PC-9 (cell line): ENCODE measurements at regions of chr22 and their contacts with region 1.

Region 1: DNA sequence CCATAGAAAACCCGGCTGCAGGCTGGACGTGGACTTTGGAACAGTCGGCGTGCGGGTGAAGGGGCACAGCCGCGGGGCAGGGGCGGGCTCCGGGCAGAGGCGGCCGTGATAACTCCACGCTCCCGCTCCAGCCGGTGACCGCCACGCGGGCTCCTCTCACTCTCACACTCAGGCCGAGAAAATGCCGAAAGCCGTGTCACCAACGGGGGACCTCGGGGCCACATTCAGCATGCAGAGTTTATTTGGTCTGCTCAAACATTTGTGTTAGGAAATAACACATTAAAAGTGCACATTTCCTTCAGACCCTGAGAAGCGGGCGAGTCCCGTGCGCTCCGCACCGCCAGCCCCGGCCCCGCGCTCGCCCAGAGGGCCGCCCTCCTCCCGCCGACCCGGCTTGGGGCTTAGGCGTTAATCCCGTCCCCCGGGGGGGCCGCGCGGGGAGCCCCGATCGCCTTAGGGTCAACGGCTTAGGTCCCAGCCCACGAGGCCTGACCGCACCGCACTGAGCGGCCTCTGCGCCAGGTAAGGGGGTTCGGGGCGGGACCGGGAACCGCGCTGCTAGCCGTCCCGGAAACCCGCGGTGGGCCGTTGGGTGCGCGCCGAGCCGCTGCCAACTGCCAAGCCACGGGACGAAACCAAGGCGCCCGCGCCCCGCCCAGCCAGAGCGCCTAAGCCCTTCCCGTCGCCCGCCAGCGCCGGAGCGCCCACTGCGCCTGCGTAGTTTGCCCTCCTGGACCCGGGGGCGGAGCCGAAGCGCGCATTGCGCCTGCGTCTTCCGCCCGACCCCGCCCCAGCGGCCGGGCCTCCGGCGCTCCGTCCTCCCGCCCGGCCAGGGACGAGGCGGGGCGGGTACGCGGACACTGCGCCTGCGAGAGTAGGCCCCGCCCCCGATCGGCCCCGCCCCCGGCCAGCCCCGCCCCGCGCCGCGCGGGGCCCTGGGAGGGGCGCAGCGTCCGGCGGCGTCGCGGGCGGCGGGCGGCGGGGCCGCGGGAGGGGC is at the start of gene ZBED4:
- DNase-seq: peak; percentile 91 to 99
- H3K4me3 ChIP-seq: peak within 1 kb of the TSS; percentile 74
- H3K27ac ChIP-seq: peak within 1 kb of the TSS; percentile 76
- H3K4me1 ChIP-seq: peaks cover 21% of the 10 kb centered on the region
- H3K27me3 ChIP-seq: no peaks in the 10 kb centered on the region
- CTCF ChIP-seq: no peak
- total RNA-seq, gene ZBED4: 18.2 and 21.4 TPM in 2 replicates

Region 2: GRCh38 chr22:49815641-49816071 is 37.5 kb before region 1 on chr22:
- CTCF ChIA-PET with region 1: no interaction called
- POLR2A ChIA-PET with region 1: interaction called, 4 read pairs
- intact Hi-C with region 1: loop called (anchors 5 kb)
- DNase-seq: peak; percentile 73 to 86
- H3K4me3 ChIP-seq: no peak overlapping the region
- H3K27ac ChIP-seq: no peak overlapping the region
- H3K4me1 ChIP-seq: peaks cover 3% of the 10 kb centered on the region; the same call in 1 of the 2 replicates
- H3K27me3 ChIP-seq: no peaks in the 10 kb centered on the region
- CTCF ChIP-seq: no peak

Region 3: GRCh38 chr22:49827853-49828598 is 25.2 kb before region 1 on chr22 and contains the start of gene BRD1:
- CTCF ChIA-PET with region 1: interaction called, 5 read pairs
- POLR2A ChIA-PET with region 1: interaction called, 3 read pairs
- intact Hi-C with region 1: loop called (anchors 2 kb)
- DNase-seq: no peak
- H3K4me3 ChIP-seq: peak within 1 kb of the TSS; percentile 90
- H3K27ac ChIP-seq: peak within 1 kb of the TSS; percentile 40; the same call in 1 of the 2 replicates
- H3K4me1 ChIP-seq: peaks cover 25% of the 10 kb centered on the region
- H3K27me3 ChIP-seq: no peaks in the 10 kb centered on the region
- CTCF ChIP-seq: no peak
- total RNA-seq, gene BRD1: 28.5 and 30.9 TPM in 2 replicates

Region 4: DNA sequence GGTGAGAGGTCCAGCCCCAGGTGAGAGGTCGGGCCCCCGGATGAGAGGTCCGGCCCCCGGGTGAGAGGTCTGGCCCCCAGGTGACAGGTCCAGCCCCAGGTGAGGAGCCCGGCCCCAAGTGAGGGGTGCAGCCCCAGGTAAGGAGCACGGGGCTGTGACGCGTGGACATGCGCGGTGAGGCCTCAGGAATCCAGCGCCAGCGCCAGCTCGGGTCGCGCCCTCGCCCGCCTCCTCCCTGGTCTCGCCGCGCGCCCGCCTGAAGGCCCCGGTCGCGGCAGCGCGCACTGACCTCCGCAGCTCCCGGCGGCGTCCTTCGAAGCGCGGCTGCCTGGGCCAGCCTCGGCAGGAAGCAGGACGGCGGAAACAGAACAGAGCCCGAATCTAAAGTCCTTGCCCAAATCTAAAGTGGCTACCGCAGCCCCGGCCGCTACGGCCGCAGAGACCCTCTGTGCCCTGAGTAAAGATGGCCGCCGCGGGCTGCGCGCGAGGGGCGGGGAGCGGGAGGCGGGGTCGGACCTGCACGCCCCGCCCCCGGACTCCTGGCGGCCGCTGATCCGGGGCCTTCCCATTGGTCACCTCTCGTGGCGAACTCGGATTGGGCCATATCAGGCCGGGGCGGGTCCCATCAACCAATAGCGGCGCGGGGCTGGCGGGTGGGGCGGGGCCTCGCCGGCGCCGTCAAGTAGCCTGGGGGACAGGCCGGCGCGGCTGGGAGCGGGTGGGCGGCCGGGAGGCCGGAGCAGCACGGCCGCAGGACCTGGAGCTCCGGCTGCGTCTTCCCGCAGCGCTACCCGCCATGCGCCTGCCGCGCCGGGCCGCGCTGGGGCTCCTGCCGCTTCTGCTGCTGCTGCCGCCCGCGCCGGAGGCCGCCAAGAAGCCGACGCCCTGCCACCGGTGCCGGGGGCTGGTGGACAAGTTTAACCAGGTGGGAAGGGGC is 65.0 kb after region 1 on chr22 and contains the starts of genes ALG12 and CRELD2:
- CTCF ChIA-PET with region 1: no interaction called
- POLR2A ChIA-PET with region 1: no interaction called
- intact Hi-C with region 1: loop called (anchors 2 kb)
- DNase-seq: peak; percentile 92 to 96
- H3K4me3 ChIP-seq: peak within 1 kb of the TSS; percentile 82
- H3K27ac ChIP-seq: peak within 1 kb of the TSS; percentile 88
- H3K4me1 ChIP-seq: peaks cover 17% of the 10 kb centered on the region
- H3K27me3 ChIP-seq: no peaks in the 10 kb centered on the region
- CTCF ChIP-seq: no peak
- total RNA-seq, gene ALG12: 16.8 and 19.2 TPM in 2 replicates
- total RNA-seq, gene CRELD2: 30.7 and 34.1 TPM in 2 replicates